ENCODE measurements at regions of chr13 and their contacts with region 1.

Region 1: DNA sequence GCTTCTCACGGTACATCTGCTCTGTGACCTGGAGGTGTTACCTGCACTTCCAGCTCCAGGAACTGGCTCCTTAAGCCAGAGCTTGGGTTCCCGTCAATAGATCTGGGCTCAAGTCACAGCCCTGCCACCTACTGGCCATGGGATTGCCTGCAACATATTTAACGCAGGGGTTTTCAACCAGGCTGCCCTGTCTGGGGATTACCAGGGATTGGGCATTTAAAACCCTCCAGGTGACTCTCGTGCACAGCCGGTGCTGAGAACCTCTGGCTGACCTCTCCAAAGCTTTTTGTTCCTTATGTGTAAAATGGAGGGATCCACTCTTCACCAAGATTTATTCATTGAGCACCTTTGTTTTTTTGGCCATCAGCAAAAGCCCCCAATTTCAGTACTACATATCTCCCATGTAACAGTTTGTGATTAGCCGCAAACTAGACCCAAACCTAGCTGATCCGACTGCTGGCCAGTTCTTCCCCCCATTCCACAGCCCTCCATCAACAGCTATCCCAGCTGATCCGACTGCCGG is 76.6 kb upstream of the STK24 start:
- DNase-seq: peak; percentile 86
- ATAC-seq: peak; percentile 100
- H3K4me3 Mint-ChIP-seq: no peak overlapping the region
- H3K27ac Mint-ChIP-seq: peak overlapping the region; percentile 65
- H3K4me1 Mint-ChIP-seq: peaks cover 2% of the 10 kb centered on the region
- H3K27me3 Mint-ChIP-seq: peaks cover 2% of the 10 kb centered on the region

Region 2: DNA sequence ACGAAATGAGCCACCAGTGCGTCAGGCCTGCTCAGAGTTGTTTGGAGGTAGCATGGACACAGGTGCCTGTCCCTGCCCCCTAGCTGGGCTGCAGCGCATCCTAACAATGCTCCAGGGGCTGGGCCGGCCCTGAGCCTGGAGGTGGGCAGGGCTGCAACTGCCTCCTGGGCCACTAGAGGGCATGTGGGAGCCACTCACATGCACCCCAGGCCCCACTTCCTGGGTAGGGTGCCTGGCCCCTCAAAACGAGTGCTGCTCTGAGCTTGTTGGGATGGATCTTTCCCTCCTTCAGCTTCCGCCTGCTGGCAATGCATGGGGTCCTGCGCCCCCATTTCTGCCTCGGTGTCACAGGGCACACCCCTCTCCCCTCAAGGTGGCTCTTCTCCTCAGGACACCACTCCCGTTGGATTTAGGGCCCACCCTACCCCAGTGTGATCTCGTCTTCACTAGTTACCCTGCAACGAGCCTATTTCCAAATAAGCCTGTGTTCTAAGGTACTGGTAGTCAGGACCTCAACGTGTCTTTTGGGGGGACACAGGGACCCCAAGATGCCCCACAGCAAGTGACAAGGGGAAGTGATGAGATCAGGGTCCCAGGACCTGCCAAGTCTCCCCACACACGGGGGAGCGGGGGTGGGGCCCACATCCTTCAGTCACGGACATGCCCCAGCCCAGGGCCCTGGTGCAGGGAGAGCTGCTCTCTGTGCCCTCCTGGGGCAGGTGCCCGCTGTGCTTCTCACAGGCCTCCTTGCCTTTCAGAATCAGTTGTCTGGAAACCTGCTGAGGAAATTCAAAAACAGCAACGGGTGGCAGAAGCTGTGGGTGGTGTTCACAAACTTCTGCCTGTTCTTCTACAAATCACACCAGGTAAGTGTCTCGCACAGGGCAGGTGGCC is 207.9 kb before region 1 on chr13:
- CTCF ChIA-PET with region 1: interaction called, 103 read pairs
- POLR2A ChIA-PET with region 1: no interaction called
- intact Hi-C with region 1: loop called (anchors 1 kb)
- DNase-seq: peak; percentile 89
- ATAC-seq: peak; percentile 95
- H3K4me3 Mint-ChIP-seq: no peak overlapping the region
- H3K27ac Mint-ChIP-seq: peak overlapping the region; percentile 88
- H3K4me1 Mint-ChIP-seq: peaks cover 15% of the 10 kb centered on the region
- H3K27me3 Mint-ChIP-seq: no peaks in the 10 kb centered on the region

Region 3: GRCh38 chr13:98454389-98454881 is 199.1 kb before region 1 on chr13:
- CTCF ChIA-PET with region 1: interaction called, 16 read pairs
- POLR2A ChIA-PET with region 1: no interaction called
- intact Hi-C with region 1: no loop called
- DNase-seq: no peak
- ATAC-seq: no peak
- H3K4me3 Mint-ChIP-seq: no peak overlapping the region
- H3K27ac Mint-ChIP-seq: peak overlapping the region; percentile 43
- H3K4me1 Mint-ChIP-seq: peaks cover 18% of the 10 kb centered on the region
- H3K27me3 Mint-ChIP-seq: no peaks in the 10 kb centered on the region

Region 4: DNA sequence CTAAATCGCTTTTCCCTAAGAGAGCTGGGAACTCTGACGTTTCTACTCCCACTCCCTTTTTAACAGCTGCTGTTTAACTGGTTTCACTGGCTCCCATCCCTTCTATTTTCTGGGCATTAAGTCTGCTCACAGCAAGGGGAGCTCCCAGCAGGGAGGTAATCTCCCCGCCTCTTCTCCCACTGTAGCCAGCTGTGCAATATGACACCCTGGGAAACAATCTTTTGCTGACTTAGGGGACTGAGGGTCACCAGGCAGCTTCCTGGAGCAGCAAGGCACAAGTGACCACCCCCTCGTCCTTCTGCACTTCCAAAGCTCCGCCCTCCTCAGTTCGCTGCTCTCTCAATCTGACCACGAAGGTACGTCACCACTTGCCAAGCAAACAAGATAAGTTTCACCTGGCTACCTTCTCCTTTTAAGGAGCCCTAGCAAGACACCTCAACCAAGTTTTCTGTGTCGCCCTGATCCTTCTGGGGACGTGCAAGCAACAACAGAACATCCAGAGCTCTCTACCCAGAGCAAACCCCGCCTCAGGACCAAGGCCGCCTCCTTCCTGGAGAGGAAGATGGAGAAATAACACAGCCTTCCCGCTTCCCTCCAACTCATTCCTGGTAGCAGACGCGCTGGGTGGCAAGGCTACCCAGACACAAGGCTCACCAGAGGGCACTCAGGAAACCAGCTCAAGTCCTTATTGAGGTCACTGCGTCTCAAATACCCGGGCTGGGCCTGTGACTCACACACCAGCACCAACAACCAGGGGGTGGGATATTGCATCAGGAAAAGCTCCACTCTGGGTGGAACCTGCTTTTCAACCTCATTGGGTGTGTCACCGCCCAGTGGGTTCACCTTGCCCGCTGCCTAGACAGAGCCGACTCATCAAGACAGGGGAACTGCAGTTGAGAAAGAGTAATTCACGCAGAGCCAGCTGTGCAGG is 169.0 kb before region 1 on chr13:
- CTCF ChIA-PET with region 1: interaction called, 11 read pairs
- POLR2A ChIA-PET with region 1: no interaction called
- intact Hi-C with region 1: no loop called
- DNase-seq: peak; percentile 85
- ATAC-seq: peak; percentile 74
- H3K4me3 Mint-ChIP-seq: no peak overlapping the region
- H3K27ac Mint-ChIP-seq: peak overlapping the region; percentile 78
- H3K4me1 Mint-ChIP-seq: peaks cover 91% of the 10 kb centered on the region
- H3K27me3 Mint-ChIP-seq: no peaks in the 10 kb centered on the region

Region 5: GRCh38 chr13:98504371-98504963 is 149.1 kb before region 1 on chr13:
- CTCF ChIA-PET with region 1: interaction called, 10 read pairs
- POLR2A ChIA-PET with region 1: no interaction called
- intact Hi-C with region 1: no loop called
- DNase-seq: peak; percentile 60
- ATAC-seq: peak; percentile 90
- H3K4me3 Mint-ChIP-seq: no peak overlapping the region
- H3K27ac Mint-ChIP-seq: peak overlapping the region; percentile 20
- H3K4me1 Mint-ChIP-seq: peaks cover 91% of the 10 kb centered on the region
- H3K27me3 Mint-ChIP-seq: no peaks in the 10 kb centered on the region